GM12878 (cell line): ENCODE measurements at regions of chr6 and their contacts with region 1.

Region 1: DNA sequence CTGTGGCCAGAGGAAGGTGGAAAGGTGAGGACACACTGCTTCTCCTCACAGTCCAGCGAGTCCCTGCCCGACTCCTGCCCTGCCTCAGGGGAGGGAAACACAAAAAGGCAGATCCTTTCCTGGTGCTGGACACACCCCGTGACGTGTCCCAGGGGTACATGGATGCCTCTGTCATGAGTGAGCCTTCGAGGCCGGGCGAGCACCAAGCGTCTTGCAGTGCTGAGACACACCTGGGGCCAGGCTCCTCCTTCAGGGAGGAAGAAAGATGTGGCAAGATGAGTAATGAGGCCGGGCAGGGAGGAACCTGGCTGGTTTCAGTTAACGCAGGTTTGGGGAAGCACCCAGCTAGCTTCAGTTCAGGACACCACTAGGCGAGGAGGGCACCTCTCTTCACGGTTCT is 215.1 kb downstream of the LY86 start:
- DNase-seq: no peak
- ATAC-seq: peak; percentile 77
- H3K4me3 ChIP-seq: no peak overlapping the region
- H3K27ac ChIP-seq: no peak overlapping the region
- H3K4me1 ChIP-seq: peaks cover 60% of the 10 kb centered on the region
- H3K27me3 ChIP-seq: no peaks in the 10 kb centered on the region
- CTCF ChIP-seq: no peak
- EP300 ChIP-seq: no peak
- POLR2A ChIP-seq: no peak
- RAD21 ChIP-seq: no peak

Region 2: DNA sequence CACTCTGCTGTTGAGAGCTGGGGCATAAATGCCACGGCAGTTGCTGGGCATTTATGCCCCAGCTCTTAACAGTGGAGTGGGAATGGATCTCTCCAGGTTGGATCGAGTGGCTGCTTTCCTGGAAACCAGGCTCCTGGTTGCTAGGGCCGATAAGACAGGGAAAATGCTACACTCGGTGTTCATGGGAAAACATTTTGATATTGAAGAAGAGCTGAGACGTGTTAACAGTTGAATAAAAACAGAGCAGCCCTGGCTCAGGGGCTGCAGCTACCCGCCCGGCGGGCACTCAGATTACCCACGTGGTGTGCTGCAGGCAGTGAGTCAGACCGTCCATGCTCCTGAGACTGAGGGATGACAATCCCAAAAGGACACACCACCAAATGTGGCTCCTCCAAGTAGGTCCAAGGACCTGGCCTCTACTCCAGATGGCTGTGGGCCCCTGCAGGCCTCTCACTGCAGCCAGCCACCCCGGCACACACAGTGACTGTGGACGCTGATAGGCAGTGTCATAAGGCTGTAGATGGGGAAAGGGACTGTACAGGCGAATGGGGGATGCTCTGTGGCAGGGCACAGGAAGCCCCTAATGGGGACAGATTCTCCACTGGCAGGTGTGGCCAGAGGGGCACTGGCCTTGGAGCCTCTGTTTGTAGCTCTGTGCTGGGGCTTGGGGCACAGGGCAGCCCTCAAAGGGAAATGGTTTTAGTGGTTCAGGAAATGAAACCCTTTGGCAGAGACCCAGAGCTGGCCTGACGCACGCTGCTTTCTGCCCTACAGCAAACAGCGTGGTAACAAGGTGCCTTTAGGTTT is 22.7 kb after region 1 on chr6:
- CTCF ChIA-PET with region 1: interaction called, 4 read pairs
- POLR2A ChIA-PET with region 1: interaction called, 9 read pairs
- RAD21 ChIA-PET with region 1: interaction called, 7 read pairs
- SMC1A ChIA-PET with region 1: interaction called, 11 read pairs
- in situ Hi-C with region 1: no loop called
- intact Hi-C with region 1: no loop called
- DNase-seq: peak; percentile 69
- ATAC-seq: peak; percentile 95
- H3K4me3 ChIP-seq: no peak overlapping the region
- H3K27ac ChIP-seq: no peak overlapping the region
- H3K4me1 ChIP-seq: peaks cover 23% of the 10 kb centered on the region
- H3K27me3 ChIP-seq: no peaks in the 10 kb centered on the region
- CTCF ChIP-seq: no peak
- EP300 ChIP-seq: peak in 1 of 2 experiments; percentile 13; a peak in 1 of 4 replicates
- POLR2A ChIP-seq: no peak
- RAD21 ChIP-seq: no peak

Region 3: DNA sequence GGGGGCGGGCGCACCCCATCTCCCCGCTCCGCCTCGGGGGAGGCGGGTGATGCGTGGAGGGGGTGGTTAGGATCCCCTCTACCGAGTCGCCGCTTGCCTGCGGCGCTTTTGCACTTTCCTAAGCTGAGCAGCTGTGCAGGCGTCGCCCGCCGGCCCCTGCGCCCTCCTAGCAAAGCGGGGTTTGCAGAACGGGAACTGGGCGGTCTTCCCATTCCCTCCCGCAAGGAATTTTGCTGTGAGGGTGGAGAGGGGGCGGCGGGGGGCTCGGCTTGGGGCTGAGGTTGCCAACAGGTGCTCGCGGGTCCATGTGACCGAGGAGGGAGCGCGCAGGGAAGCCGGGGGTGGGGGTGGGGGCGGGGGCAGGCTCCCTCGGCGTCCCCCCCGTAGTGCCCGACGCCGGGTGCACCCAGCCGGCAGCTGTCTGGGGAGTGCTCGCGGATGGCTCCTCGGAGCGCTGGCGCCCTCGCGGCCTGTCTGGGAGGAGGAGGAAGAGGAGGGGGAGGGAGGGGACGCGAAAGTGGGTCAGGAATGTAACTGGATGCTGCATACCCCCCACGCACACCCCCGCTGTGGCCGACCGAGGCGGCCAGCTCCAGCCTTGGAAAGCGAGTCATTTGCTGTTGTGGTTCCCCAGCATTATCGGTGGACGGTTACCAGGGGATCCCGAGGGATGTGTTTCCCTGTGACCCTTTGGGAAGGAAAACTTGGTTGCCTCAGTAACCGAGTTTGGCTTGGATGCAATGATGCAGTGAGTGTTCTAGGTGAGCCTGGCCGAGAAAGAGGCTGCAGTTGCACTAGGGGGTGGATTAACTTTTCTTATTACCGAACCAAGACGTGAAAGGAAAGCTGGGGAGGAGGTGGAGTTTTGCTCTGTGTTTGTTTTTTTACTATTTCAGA is 248.8 kb after region 1 on chr6:
- CTCF ChIA-PET with region 1: no interaction called
- POLR2A ChIA-PET with region 1: no interaction called
- RAD21 ChIA-PET with region 1: no interaction called
- SMC1A ChIA-PET with region 1: no interaction called
- in situ Hi-C with region 1: no loop called
- intact Hi-C with region 1: no loop called
- DNase-seq: no peak
- ATAC-seq: peak; percentile 71
- H3K4me3 ChIP-seq: peak overlapping the region; percentile 78
- H3K27ac ChIP-seq: no peak overlapping the region
- H3K4me1 ChIP-seq: peaks cover 5% of the 10 kb centered on the region
- H3K27me3 ChIP-seq: peaks cover 0 to 5% of the 10 kb centered on the region in 2 experiments; a peak in 3 of 4 replicates
- CTCF ChIP-seq: no peak
- EP300 ChIP-seq: no peak
- POLR2A ChIP-seq: no peak
- RAD21 ChIP-seq: no peak